ENCODE measurements at regions of chr12 and their contacts with region 1.

Region 1: DNA sequence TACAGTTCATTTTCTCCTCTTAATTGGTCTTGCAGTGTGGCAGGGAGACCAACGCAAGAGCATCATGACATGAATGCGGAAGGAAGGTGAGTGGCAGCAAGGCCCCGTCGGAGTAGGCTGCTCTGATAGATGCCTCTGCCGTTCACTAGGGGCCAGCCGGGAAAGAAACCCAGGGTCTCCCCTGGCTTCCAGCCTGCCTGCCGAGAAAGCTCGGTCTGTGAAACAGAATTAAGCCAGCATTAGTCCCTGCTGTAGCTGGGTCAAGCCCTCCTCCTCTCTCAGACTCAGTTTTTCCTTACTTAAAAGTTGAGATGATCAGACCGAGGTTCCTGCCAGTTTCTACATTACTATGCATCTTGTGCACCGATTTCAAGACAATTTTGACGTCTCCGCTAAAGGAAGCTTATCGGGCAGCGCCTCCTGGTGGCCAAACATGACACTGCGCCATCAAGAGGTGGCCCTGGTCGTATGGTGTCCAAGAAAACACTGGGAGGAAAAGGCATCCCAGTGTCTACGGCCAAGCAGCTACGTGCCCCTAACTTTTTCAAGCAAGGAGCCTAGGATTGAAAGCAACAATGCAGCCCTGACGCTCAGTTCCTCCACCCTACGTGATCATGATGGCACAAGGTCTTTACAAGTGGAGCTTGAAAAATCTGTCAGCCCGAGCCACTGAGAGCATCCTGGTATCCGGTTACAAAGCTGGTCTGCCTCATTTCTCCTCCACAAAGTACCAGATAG is 131.6 kb downstream of the KSR2 start:
- DNase-seq: peak; percentile 35
- ATAC-seq: peak; percentile 82
- H3K4me3 ChIP-seq: no peak overlapping the region
- H3K27ac ChIP-seq: no peak overlapping the region
- H3K4me1 ChIP-seq: no peaks in the 10 kb centered on the region
- H3K27me3 ChIP-seq: peaks cover 3 to 36% of the 10 kb centered on the region in 2 experiments; a peak in 3 of 5 replicates
- CTCF ChIP-seq: peak; percentile 95
- EP300 ChIP-seq: no peak
- POLR2A ChIP-seq: no peak
- RAD21 ChIP-seq: peak; percentile 75

Region 2: GRCh38 chr12:117212563-117213190 is 624.5 kb before region 1 on chr12:
- CTCF ChIA-PET with region 1: interaction called, 8 read pairs
- POLR2A ChIA-PET with region 1: no interaction called
- in situ Hi-C with region 1: loop called (anchors 10 kb)
- intact Hi-C with region 1: loop called (anchors 1 kb)
- DNase-seq: peak; percentile 46
- ATAC-seq: peak; percentile 85
- H3K4me3 ChIP-seq: no peak overlapping the region
- H3K27ac ChIP-seq: no peak overlapping the region
- H3K4me1 ChIP-seq: no peaks in the 10 kb centered on the region
- H3K27me3 ChIP-seq: peaks cover 6 to 33% of the 10 kb centered on the region in 2 experiments; a peak in 4 of 5 replicates
- CTCF ChIP-seq: peak; percentile 88
- EP300 ChIP-seq: no peak
- POLR2A ChIP-seq: no peak
- RAD21 ChIP-seq: peak; percentile 32; the same call in 1 of the 2 replicates

Region 3: GRCh38 chr12:117236456-117237001 is 600.6 kb before region 1 on chr12:
- CTCF ChIA-PET with region 1: interaction called, 6 read pairs
- POLR2A ChIA-PET with region 1: no interaction called
- in situ Hi-C with region 1: loop called (anchors 10 kb)
- intact Hi-C with region 1: loop called (anchors 1 kb)
- DNase-seq: peak; percentile 39
- ATAC-seq: peak; percentile 84
- H3K4me3 ChIP-seq: no peak overlapping the region
- H3K27ac ChIP-seq: no peak overlapping the region
- H3K4me1 ChIP-seq: no peaks in the 10 kb centered on the region
- H3K27me3 ChIP-seq: peaks cover 1 to 17% of the 10 kb centered on the region in 2 experiments; a peak in 4 of 5 replicates
- CTCF ChIP-seq: peak; percentile 66
- EP300 ChIP-seq: no peak
- POLR2A ChIP-seq: no peak
- RAD21 ChIP-seq: 0 out of 2 replicates have a peak, but pooled peaks have one; percentile 32

Region 4: DNA sequence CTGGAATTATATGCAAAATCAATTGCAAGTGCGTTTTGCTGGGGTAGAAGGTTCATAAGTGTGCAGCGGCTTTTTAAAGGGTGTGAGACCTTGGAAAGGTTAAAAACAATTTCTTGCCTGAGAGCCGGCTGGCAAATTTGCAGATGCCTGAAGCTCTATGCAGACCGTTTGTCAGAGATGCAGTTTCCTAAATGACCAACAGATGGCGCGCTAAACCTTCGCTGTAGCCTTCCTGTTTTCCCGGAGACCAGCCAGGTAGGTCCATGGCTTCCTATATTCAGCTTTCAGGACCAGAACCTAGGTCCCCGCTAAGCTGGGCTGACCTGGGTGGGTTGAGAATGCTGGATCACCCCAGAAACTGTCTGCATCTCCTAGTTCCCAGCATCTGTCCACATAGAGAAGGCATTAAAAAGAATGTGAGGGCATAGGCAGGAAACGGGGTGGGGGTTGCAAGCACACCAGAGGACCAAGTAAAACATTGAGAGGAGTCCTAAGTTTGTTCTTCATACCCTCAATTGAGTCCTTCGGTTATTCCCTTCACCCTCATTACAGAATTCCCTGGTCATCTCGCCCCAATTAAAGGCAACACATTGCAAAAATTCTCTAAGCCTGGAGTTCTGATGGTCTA is 470.0 kb before region 1 on chr12:
- CTCF ChIA-PET with region 1: interaction called, 24 read pairs
- POLR2A ChIA-PET with region 1: no interaction called
- in situ Hi-C with region 1: loop called (anchors 5 kb)
- intact Hi-C with region 1: no loop called
- DNase-seq: peak; percentile 63
- ATAC-seq: peak; percentile 87
- H3K4me3 ChIP-seq: no peak overlapping the region
- H3K27ac ChIP-seq: no peak overlapping the region
- H3K4me1 ChIP-seq: no peaks in the 10 kb centered on the region
- H3K27me3 ChIP-seq: peaks cover 4 to 13% of the 10 kb centered on the region in 2 experiments; a peak in 3 of 5 replicates
- CTCF ChIP-seq: peak; percentile 90
- EP300 ChIP-seq: no peak
- POLR2A ChIP-seq: no peak
- RAD21 ChIP-seq: peak; percentile 80

Region 5: DNA sequence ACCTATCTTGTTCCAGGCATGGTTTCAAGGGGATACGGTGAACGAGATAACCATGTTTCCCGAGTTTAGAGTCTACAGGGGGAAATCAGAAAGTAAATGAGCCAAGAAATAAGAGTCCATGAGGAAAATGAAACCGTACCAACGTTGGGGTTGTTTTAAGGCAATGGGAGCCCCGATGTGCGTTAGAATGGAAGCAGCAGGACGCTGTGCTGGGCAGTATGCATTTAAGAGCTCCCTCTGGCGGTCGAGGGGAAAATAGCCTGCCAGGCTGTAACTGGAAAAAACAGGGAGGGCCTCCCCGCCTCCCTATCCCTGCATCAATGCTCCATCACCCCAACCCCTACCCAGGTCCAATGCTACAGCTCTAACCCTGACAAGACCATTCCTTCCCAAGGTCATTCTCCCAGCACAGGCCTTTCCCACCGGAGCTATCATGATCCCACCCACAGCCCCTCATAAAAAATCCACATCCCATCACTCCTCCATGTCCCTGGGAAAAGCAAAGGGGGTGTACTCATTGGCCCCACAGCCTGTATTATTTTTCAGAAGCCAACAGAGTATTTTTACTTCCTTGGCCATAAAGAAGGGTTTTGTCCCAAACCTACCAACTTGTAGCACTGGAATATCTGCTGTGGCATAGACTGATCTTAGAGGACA is 249.4 kb before region 1 on chr12:
- CTCF ChIA-PET with region 1: no interaction called
- POLR2A ChIA-PET with region 1: no interaction called
- in situ Hi-C with region 1: loop called (anchors 10 kb)
- intact Hi-C with region 1: no loop called
- DNase-seq: peak; percentile 15
- ATAC-seq: peak; percentile 82
- H3K4me3 ChIP-seq: no peak overlapping the region
- H3K27ac ChIP-seq: no peak overlapping the region
- H3K4me1 ChIP-seq: no peaks in the 10 kb centered on the region
- H3K27me3 ChIP-seq: peaks cover 0 to under 1% of the 10 kb centered on the region in 2 experiments; a peak in 2 of 5 replicates
- CTCF ChIP-seq: peak; percentile 80
- EP300 ChIP-seq: no peak
- POLR2A ChIP-seq: no peak
- RAD21 ChIP-seq: peak; percentile 68

Region 6: GRCh38 chr12:117685110-117685926 is 151.8 kb before region 1 on chr12:
- CTCF ChIA-PET with region 1: no interaction called
- POLR2A ChIA-PET with region 1: no interaction called
- in situ Hi-C with region 1: no loop called
- intact Hi-C with region 1: loop called (anchors 10 kb)
- DNase-seq: peak; percentile 42
- ATAC-seq: peak; percentile 75
- H3K4me3 ChIP-seq: no peak overlapping the region
- H3K27ac ChIP-seq: no peak overlapping the region
- H3K4me1 ChIP-seq: peaks cover 12% of the 10 kb centered on the region
- H3K27me3 ChIP-seq: peaks cover 2 to 12% of the 10 kb centered on the region in 2 experiments; a peak in 2 of 5 replicates
- CTCF ChIP-seq: no peak
- EP300 ChIP-seq: no peak
- POLR2A ChIP-seq: no peak
- RAD21 ChIP-seq: no peak

Region 7: GRCh38 chr12:117803001-117803400 is 34.2 kb before region 1 on chr12:
- CTCF ChIA-PET with region 1: no interaction called
- POLR2A ChIA-PET with region 1: no interaction called
- in situ Hi-C with region 1: no loop called
- intact Hi-C with region 1: no loop called
- DNase-seq: peak; percentile 71
- ATAC-seq: peak; percentile 89
- H3K4me3 ChIP-seq: no peak overlapping the region
- H3K27ac ChIP-seq: no peak overlapping the region
- H3K4me1 ChIP-seq: peaks cover 11% of the 10 kb centered on the region; the same call in 1 of the 2 replicates
- H3K27me3 ChIP-seq: peaks cover 0 to 34% of the 10 kb centered on the region in 2 experiments; a peak in 2 of 5 replicates
- CTCF ChIP-seq: no peak
- EP300 ChIP-seq: peak in 1 of 2 experiments; percentile 43; a peak in 1 of 4 replicates
- POLR2A ChIP-seq: no peak
- RAD21 ChIP-seq: no peak

Region 8: GRCh38 chr12:117890137-117890536 is 53.0 kb after region 1 on chr12:
- CTCF ChIA-PET with region 1: no interaction called
- POLR2A ChIA-PET with region 1: no interaction called
- in situ Hi-C with region 1: no loop called
- intact Hi-C with region 1: no loop called
- DNase-seq: no peak
- ATAC-seq: peak; percentile 88
- H3K4me3 ChIP-seq: no peak overlapping the region
- H3K27ac ChIP-seq: no peak overlapping the region
- H3K4me1 ChIP-seq: no peaks in the 10 kb centered on the region
- H3K27me3 ChIP-seq: no peaks in the 10 kb centered on the region; a peak in 1 of 5 replicates
- CTCF ChIP-seq: no peak
- EP300 ChIP-seq: no peak
- POLR2A ChIP-seq: no peak
- RAD21 ChIP-seq: no peak